ENCODE measurements at regions of chr13 and their contacts with region 1.

Region 1: DNA sequence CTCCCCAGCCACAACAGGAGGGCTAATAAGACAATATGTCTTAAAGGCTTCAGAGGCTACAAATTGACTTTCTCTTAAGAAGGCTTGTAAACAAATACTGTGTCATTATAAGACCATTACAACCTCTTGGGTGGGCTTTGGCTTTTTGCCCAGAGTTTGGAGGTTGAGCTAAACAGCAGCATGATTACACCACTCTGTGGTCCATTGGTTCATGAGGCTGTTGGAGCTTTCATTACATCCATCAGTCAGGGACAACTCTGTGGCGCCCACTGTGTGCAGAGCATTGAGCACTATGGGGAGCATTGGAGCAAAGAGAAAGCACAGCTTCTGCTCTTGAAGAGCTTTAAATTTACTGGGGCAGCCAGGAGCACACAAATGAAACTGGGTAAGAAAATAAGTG is 75.9 kb downstream of the TNFSF11 start:
- DNase-seq: no peak
- ATAC-seq: no peak
- H3K4me3 ChIP-seq: no peak overlapping the region
- H3K27ac ChIP-seq: no peak overlapping the region
- H3K4me1 ChIP-seq: no peaks in the 10 kb centered on the region
- H3K27me3 ChIP-seq: peaks cover 24% of the 10 kb centered on the region
- CTCF ChIP-seq: no peak
- POLR2A ChIP-seq: no peak
- RAD21 ChIP-seq: no peak

Region 2: DNA sequence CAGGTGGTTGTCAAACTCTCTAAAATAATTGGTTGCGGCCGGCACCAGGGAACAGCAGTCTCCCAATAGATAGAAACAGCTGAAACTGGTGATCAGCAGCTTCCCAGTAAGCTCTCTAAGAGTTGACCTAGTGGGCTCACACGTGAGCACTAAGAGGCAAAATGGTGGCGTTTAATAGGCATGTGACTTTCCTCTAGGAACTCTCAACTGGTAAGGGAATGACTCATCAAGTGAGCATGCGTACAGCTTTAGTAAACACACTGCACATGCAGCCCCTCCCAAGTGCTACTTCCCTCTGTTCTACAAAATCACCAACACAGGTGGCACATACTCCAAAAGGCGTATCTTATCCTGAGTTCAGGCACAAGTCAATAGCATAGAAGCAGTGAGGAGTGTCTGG is 34.1 kb before region 1 on chr13:
- CTCF ChIA-PET with region 1: no interaction called
- POLR2A ChIA-PET with region 1: no interaction called
- dilution Hi-C with region 1: no loop called
- in situ Hi-C with region 1: no loop called
- intact Hi-C with region 1: no loop called
- DNase-seq: peak; percentile 18
- ATAC-seq: no peak
- H3K4me3 ChIP-seq: no peak overlapping the region
- H3K27ac ChIP-seq: no peak overlapping the region
- H3K4me1 ChIP-seq: no peaks in the 10 kb centered on the region
- H3K27me3 ChIP-seq: peaks cover 22% of the 10 kb centered on the region
- CTCF ChIP-seq: no peak
- POLR2A ChIP-seq: no peak
- RAD21 ChIP-seq: no peak

Region 3: GRCh38 chr13:42633495-42633894 is 16.3 kb before region 1 on chr13:
- CTCF ChIA-PET with region 1: no interaction called
- POLR2A ChIA-PET with region 1: no interaction called
- dilution Hi-C with region 1: no loop called
- in situ Hi-C with region 1: no loop called
- intact Hi-C with region 1: no loop called
- DNase-seq: peak; percentile 6
- ATAC-seq: no peak
- H3K4me3 ChIP-seq: no peak overlapping the region
- H3K27ac ChIP-seq: no peak overlapping the region
- H3K4me1 ChIP-seq: no peaks in the 10 kb centered on the region
- H3K27me3 ChIP-seq: peaks cover 5% of the 10 kb centered on the region; the same call in 1 of the 2 replicates
- CTCF ChIP-seq: no peak
- POLR2A ChIP-seq: no peak
- RAD21 ChIP-seq: no peak

Region 4: GRCh38 chr13:43804461-43805070 is 1154.7 kb after region 1 on chr13:
- CTCF ChIA-PET with region 1: interaction called, 3 read pairs
- POLR2A ChIA-PET with region 1: no interaction called
- dilution Hi-C with region 1: no loop called
- in situ Hi-C with region 1: no loop called
- intact Hi-C with region 1: loop called (anchors 10 kb)
- DNase-seq: peak; percentile 78
- ATAC-seq: peak; percentile 82
- H3K4me3 ChIP-seq: peak overlapping the region; percentile 3; the same call in 1 of the 2 replicates
- H3K27ac ChIP-seq: peak overlapping the region; percentile 50; the same call in 1 of the 2 replicates
- H3K4me1 ChIP-seq: peaks cover 2% of the 10 kb centered on the region; the same call in 1 of the 2 replicates
- H3K27me3 ChIP-seq: no peaks in the 10 kb centered on the region
- CTCF ChIP-seq: peak; percentile 64
- POLR2A ChIP-seq: no peak
- RAD21 ChIP-seq: peak; percentile 64